Ascending aorta (tissue), 2 donors: ENCODE measurements at regions of chr17 and their contacts with region 1.

Region 1: GRCh38 chr17:57588074-57588473 is 157.0 kb downstream of the CCDC182 start:
- DNase-seq: peak in 1 of 2 donors; percentile 71
- H3K4me3 ChIP-seq: no peak overlapping the region
- H3K27ac ChIP-seq: peak overlapping the region; percentile 58 to 75
- H3K4me1 ChIP-seq: peaks cover 6 to 23% of the 10 kb centered on the region in 2 donors
- H3K27me3 ChIP-seq: no peaks in the 10 kb centered on the region
- CTCF ChIP-seq: no peak

Region 2: DNA sequence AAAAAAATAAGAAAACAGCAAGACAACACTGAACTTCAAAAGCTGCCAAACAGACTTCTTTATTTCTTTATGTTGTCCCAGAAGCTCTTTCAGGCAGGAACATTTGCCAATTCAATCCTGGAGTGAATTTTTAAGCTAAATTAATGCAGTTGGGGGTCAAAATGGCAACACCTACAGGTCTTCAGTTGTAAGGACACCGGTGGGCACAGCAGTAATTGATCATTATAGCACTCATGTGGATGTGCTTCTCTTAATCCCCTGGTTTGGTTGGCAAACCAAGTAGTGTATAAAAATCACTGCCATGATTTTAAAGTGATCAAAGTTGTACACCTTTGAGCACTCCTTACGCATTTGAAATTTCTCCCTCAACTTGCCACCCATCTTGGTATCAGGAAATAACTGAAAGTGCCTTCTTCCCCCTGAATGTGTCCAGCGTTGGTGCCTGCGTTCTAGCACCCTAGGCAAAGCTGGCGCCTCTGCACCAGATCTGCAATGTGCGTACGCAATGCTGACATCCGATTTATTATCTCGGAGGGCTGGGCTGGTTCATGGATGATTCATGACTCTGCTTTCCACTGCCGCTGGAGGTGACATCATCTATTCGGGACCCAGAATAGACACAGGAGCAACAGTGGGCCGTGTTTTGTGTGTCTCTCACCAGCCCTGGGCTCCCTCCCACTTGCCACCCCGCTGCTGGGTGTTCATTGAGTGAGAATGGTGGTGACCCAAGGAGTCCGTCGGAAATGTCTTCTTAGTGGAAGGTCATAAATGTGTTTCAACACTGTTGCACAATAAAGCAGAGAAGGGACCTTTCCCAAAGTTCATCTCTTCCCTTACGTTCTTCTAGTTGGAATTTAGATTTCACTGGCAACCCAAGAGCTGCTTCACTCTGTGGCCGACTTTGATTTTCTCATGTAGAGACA is 46.3 kb before region 1 on chr17:
- intact Hi-C with region 1: loop called (anchors 2 kb)
- DNase-seq: peak; percentile 64 to 90
- H3K4me3 ChIP-seq: peak overlapping the region in 1 of 2 donors; percentile 28
- H3K27ac ChIP-seq: peak overlapping the region; percentile 9 to 35
- H3K4me1 ChIP-seq: peaks cover 0 to 8% of the 10 kb centered on the region in 2 donors
- H3K27me3 ChIP-seq: no peaks in the 10 kb centered on the region
- CTCF ChIP-seq: no peak

Region 3: DNA sequence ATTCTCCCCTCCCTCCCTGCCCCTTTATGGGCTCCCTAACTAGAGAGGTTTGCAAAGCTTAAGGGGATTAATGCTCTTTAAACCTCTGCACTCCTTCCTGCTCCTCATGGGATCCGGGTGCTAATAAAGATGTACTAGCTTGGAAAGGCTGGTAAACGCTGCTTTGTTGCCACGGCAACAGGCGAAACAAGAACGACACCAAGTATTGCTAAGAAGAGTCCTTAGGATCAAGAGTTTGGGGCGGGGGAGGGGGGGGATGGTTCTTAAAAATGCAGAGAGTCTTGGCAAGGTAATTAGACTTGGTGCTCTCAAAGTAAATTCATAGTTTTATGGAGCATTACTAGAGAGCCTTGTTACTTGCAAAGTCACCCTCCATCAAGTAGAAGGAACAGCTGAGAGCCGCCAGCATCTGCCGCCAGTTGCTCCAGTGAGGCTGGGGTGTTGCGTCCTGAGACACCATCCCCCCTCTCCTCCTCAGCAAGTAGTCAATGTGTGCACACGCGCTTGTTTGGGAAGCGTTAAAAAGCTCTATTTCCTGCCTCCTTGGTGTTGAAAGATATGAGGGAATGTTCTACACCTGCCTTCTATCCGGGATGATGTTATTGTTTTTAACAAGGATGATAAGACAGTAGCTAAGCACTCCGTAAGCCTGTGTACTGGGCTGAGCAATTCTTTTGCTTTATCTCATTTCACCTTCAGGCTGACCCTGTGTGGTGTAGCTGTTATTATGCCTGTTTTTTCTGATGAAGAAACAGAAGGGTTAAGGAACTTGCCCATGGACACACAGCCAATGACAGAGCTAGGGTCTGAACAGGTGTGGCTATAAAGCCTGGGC is 33.9 kb before region 1 on chr17:
- intact Hi-C with region 1: no loop called
- DNase-seq: no peak
- H3K4me3 ChIP-seq: no peak overlapping the region
- H3K27ac ChIP-seq: no peak overlapping the region
- H3K4me1 ChIP-seq: peaks cover 0 to 27% of the 10 kb centered on the region in 2 donors
- H3K27me3 ChIP-seq: no peaks in the 10 kb centered on the region
- CTCF ChIP-seq: no peak

Region 4: GRCh38 chr17:57572062-57572461 is 16.0 kb before region 1 on chr17:
- intact Hi-C with region 1: loop called (anchors 2 kb)
- DNase-seq: peak in 1 of 2 donors; percentile 81
- H3K4me3 ChIP-seq: no peak overlapping the region
- H3K27ac ChIP-seq: peak overlapping the region; percentile 79 to 88
- H3K4me1 ChIP-seq: peaks cover 11 to 37% of the 10 kb centered on the region in 2 donors
- H3K27me3 ChIP-seq: no peaks in the 10 kb centered on the region
- CTCF ChIP-seq: no peak